Activated B cell treated with CpG ODN at 0.5 μM for 24 hours (primary cell): ENCODE measurements at regions of chr16 and their contacts with region 1.

Region 1: GRCh38 chr16:30571695-30572600 is at the start of gene ZNF688:
- DNase-seq: peak; percentile 78
- ATAC-seq: peak; percentile 86
- H3K4me3 Mint-ChIP-seq: peak within 1 kb of the TSS; percentile 89
- H3K27ac Mint-ChIP-seq: peak within 1 kb of the TSS; percentile 96
- H3K4me1 Mint-ChIP-seq: peaks cover 41% of the 10 kb centered on the region
- H3K27me3 Mint-ChIP-seq: no peaks in the 10 kb centered on the region
- CTCF ChIP-seq: no peak
- total RNA-seq, gene ZNF688: 13.9 and 14.7 TPM in 2 replicates

Region 2: GRCh38 chr16:30407102-30407803 is 164.7 kb before region 1 on chr16 and contains the start of gene ZNF771:
- CTCF ChIA-PET with region 1: no interaction called
- POLR2A ChIA-PET with region 1: interaction called, 10 read pairs
- intact Hi-C with region 1: no loop called
- DNase-seq: peak; percentile 90
- ATAC-seq: peak; percentile 89
- H3K4me3 Mint-ChIP-seq: peak within 1 kb of the TSS; percentile 89
- H3K27ac Mint-ChIP-seq: peak within 1 kb of the TSS; percentile 90
- H3K4me1 Mint-ChIP-seq: peaks cover 27% of the 10 kb centered on the region
- H3K27me3 Mint-ChIP-seq: no peaks in the 10 kb centered on the region
- CTCF ChIP-seq: no peak
- total RNA-seq, gene ZNF771: 4.4 and 5.2 TPM in 2 replicates

Region 3: DNA sequence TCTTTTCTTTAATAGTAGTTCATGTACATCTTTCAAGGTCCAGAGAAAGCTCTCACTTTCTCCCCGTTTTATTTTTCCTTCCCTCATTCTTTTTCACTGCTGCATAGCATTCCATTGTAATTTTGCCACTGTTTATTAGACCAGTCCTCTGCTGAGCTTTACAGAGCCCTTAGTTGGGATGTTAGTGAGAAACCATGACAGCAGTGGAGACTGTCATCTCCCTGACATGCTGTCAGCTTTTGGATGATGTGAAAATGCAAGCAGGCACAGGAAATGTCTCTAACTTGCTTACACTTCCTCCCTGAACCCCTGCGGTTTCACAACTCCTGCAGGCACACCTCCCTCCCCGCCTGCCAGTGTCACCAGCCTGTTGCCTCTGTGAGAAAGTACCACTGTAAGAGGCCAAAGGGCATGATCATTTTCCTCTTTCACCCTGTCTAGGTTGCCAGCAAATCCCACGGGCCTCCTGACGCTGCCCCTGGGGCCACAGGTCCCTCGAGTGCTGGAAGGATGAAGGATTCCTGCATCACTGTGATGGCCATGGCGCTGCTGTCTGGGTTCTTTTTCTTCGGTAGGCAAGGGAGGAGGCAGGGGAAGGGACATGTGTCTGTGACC is 99.5 kb before region 1 on chr16 and contains the start of gene ITGAL:
- CTCF ChIA-PET with region 1: no interaction called
- POLR2A ChIA-PET with region 1: interaction called, 11 read pairs
- intact Hi-C with region 1: no loop called
- DNase-seq: peak; percentile 59
- ATAC-seq: peak; percentile 65
- H3K4me3 Mint-ChIP-seq: peak within 1 kb of the TSS; percentile 89
- H3K27ac Mint-ChIP-seq: peak within 1 kb of the TSS; percentile 94
- H3K4me1 Mint-ChIP-seq: peaks cover 60% of the 10 kb centered on the region
- H3K27me3 Mint-ChIP-seq: no peaks in the 10 kb centered on the region
- CTCF ChIP-seq: no peak
- total RNA-seq, gene ITGAL: 216 and 240 TPM in 2 replicates

Region 4: GRCh38 chr16:30557957-30558788 is 13.8 kb before region 1 on chr16 and contains the start of gene ZNF764:
- CTCF ChIA-PET with region 1: interaction called, 12 read pairs
- POLR2A ChIA-PET with region 1: interaction called, 152 read pairs
- intact Hi-C with region 1: loop called (anchors 1 kb)
- DNase-seq: peak; percentile 91
- ATAC-seq: peak; percentile 93
- H3K4me3 Mint-ChIP-seq: peak within 1 kb of the TSS; percentile 83
- H3K27ac Mint-ChIP-seq: peak within 1 kb of the TSS; percentile 84
- H3K4me1 Mint-ChIP-seq: peaks cover 43% of the 10 kb centered on the region
- H3K27me3 Mint-ChIP-seq: no peaks in the 10 kb centered on the region
- CTCF ChIP-seq: no peak
- total RNA-seq, gene ZNF764: 16.1 and 19.2 TPM in 2 replicates

Region 5: DNA sequence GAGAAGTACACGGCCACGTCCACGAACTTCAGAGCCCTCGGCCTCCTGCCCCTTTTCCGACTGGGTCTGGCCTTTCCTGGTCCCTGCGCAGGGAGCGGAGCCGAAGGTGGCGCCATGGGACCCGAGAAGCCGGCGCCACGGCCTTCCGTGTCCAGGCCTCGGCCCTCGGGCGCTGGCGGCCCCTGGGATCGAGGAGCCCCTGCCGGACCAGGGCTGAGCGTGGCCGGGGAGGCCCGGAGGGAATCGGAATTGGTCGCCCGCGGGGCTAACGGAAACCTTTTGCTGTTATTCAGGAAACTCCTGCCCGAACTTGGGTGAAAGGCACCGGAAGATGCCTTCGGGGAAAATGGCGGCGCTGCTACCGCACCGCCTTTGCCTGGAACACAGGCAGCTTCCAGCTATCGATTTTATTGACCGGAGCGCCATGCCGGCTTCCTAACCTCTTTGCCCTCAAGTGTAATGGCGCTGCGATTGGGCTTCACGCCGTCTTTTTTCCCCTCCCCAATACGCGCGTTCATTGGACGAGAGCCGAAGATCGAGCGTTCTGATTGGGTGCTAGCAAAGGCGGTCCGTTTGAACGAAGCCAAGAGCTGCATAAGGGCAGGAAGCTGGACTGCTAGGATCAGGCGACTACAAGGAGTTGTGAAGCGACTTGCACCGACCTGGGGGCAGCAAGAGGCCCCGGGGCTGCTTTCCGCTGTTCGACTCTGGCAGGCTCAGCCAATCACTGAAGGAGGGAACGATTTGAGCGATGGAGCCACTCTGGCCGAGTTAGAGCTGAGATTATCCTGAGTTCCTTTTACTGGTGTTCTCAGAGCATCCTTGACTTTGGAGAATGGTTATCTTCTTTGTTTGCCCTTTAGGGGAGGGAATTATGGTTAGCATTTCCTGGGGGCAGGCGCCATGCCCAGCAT is 38.2 kb after region 1 on chr16 and contains the start of gene ZNF689:
- CTCF ChIA-PET with region 1: no interaction called
- POLR2A ChIA-PET with region 1: interaction called, 15 read pairs
- intact Hi-C with region 1: loop called (anchors 1 kb)
- DNase-seq: peak; percentile 90
- ATAC-seq: peak; percentile 87
- H3K4me3 Mint-ChIP-seq: peak within 1 kb of the TSS; percentile 93
- H3K27ac Mint-ChIP-seq: peak within 1 kb of the TSS; percentile 95
- H3K4me1 Mint-ChIP-seq: peaks cover 19% of the 10 kb centered on the region
- H3K27me3 Mint-ChIP-seq: no peaks in the 10 kb centered on the region
- CTCF ChIP-seq: no peak
- total RNA-seq, gene ZNF689: 10.1 and 11.6 TPM in 2 replicates

Region 6: DNA sequence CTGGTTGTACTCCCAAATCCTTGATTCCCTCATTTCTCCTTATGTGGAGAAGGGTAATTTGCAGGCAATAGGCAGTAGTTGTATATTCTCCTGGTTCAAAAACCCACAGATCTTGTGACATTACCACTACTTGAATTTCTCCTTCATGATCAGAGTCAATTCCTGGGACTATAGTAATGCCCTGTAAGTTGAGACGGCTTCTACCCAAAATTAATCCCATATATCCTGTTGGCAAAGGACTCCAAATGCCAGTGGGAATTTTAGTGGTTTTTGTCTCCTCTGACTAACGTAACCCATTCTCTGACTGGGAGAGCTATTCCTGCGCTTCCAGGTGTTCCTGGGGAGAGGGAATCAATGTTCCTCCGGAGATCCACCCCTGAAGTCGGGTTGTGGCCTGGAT is 49.8 kb after region 1 on chr16:
- CTCF ChIA-PET with region 1: no interaction called
- POLR2A ChIA-PET with region 1: no interaction called
- intact Hi-C with region 1: no loop called
- DNase-seq: no peak
- ATAC-seq: no peak
- H3K4me3 Mint-ChIP-seq: no peak overlapping the region
- H3K27ac Mint-ChIP-seq: no peak overlapping the region
- H3K4me1 Mint-ChIP-seq: no peaks in the 10 kb centered on the region
- H3K27me3 Mint-ChIP-seq: peaks cover 3% of the 10 kb centered on the region
- CTCF ChIP-seq: no peak

Region 7: DNA sequence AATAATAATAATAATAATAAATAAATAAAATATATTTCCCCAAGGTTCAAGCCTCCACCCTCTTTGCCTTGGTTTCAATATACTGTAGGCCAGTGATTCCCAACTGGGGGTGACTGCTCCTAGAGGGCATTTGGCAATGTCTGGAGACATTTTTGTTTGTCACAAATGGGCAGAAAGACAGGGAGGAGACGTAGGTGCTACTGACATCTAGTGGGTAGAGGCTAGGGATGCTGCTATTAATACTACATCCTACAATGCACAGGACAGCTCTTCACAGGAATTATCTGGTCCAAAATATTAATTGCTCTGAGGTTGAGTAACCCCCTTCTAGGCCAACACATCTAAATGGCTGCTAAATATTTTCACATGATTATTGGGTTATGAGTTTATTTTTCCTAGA is 66.0 kb after region 1 on chr16:
- CTCF ChIA-PET with region 1: no interaction called
- POLR2A ChIA-PET with region 1: interaction called, 11 read pairs
- intact Hi-C with region 1: loop called (anchors 1 kb)
- DNase-seq: no peak
- ATAC-seq: no peak
- H3K4me3 Mint-ChIP-seq: no peak overlapping the region
- H3K27ac Mint-ChIP-seq: no peak overlapping the region
- H3K4me1 Mint-ChIP-seq: peaks cover 21% of the 10 kb centered on the region
- H3K27me3 Mint-ChIP-seq: no peaks in the 10 kb centered on the region
- CTCF ChIP-seq: no peak